HCT116 (cell line): ENCODE measurements at regions of chr4 and their contacts with region 1.

Region 1: GRCh38 chr4:11720292-11720691 is 291.6 kb upstream of the HS3ST1 start:
- DNase-seq: no peak
- ATAC-seq: peak; percentile 82
- H3K4me3 ChIP-seq: no peak overlapping the region
- H3K27ac ChIP-seq: peak overlapping the region; percentile 45
- H3K4me1 ChIP-seq: peaks cover 5 to 47% of the 10 kb centered on the region in 2 experiments; a peak in 3 of 4 replicates
- H3K27me3 ChIP-seq: no peaks in the 10 kb centered on the region
- CTCF ChIP-seq: peak; percentile 48 to 77 (median 74); a peak in 5 of 6 replicates
- POLR2A ChIP-seq: no peak
- RAD21 ChIP-seq: peak; percentile 92

Region 2: GRCh38 chr4:10582059-10582686 is 1138.1 kb before region 1 on chr4:
- CTCF ChIA-PET with region 1: no interaction called
- POLR2A ChIA-PET with region 1: no interaction called
- RAD21 ChIA-PET with region 1: no interaction called
- intact Hi-C with region 1: loop called (anchors 2 kb)
- DNase-seq: peak; percentile 54
- ATAC-seq: peak; percentile 94
- H3K4me3 ChIP-seq: no peak overlapping the region
- H3K27ac ChIP-seq: no peak overlapping the region
- H3K4me1 ChIP-seq: peaks cover 0 to 9% of the 10 kb centered on the region in 2 experiments; a peak in 1 of 4 replicates
- H3K27me3 ChIP-seq: no peaks in the 10 kb centered on the region
- CTCF ChIP-seq: peak; percentile 72 to 94 (median 76)
- POLR2A ChIP-seq: no peak
- RAD21 ChIP-seq: peak; percentile 93

Region 3: DNA sequence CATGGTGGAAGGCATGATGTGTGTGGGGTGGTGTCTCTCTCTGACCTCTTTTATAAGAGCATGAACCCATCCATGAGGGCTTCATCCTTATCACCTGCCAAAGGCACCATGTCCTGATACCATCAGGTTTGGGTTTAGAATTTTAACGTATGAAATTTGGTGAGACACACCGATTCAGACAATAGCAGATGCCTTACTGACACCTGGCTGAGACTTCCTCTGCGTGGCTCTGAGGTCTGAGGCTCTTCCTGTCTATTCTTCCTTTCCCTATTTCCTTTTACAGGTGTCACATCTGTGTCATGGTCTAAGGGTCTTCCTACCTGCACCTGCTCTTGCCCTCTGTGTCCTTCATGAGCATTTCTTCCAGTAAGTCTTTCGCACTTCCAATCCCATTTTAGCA is 715.0 kb before region 1 on chr4:
- CTCF ChIA-PET with region 1: no interaction called
- POLR2A ChIA-PET with region 1: no interaction called
- RAD21 ChIA-PET with region 1: no interaction called
- intact Hi-C with region 1: no loop called
- DNase-seq: no peak
- ATAC-seq: no peak
- H3K4me3 ChIP-seq: no peak overlapping the region
- H3K27ac ChIP-seq: no peak overlapping the region
- H3K4me1 ChIP-seq: no peaks in the 10 kb centered on the region
- H3K27me3 ChIP-seq: no peaks in the 10 kb centered on the region
- CTCF ChIP-seq: no peak
- POLR2A ChIP-seq: no peak
- RAD21 ChIP-seq: no peak

Region 4: GRCh38 chr4:11487876-11488544 is 232.3 kb before region 1 on chr4:
- CTCF ChIA-PET with region 1: no interaction called
- POLR2A ChIA-PET with region 1: no interaction called
- RAD21 ChIA-PET with region 1: no interaction called
- intact Hi-C with region 1: loop called (anchors 5 kb)
- DNase-seq: no peak
- ATAC-seq: no peak
- H3K4me3 ChIP-seq: no peak overlapping the region
- H3K27ac ChIP-seq: no peak overlapping the region
- H3K4me1 ChIP-seq: peaks cover 17 to 38% of the 10 kb centered on the region in 2 experiments; a peak in 3 of 4 replicates
- H3K27me3 ChIP-seq: no peaks in the 10 kb centered on the region
- CTCF ChIP-seq: no peak
- POLR2A ChIP-seq: no peak
- RAD21 ChIP-seq: no peak

Region 5: DNA sequence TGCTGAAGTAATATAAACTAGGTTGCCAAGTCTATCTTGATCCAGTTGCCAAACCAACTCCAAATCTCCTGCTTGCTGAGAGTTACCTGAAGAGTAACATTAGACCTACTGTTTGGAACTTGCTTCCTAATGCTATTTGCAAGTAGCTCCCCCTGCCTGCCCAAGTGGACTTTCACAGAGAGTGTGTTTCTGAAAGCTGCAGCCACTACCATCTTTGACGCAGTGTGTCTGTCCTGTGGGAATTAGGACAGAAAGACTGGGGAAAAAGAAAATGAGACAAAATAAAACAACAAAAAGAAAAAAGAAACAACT is 96.6 kb before region 1 on chr4:
- CTCF ChIA-PET with region 1: no interaction called
- POLR2A ChIA-PET with region 1: no interaction called
- RAD21 ChIA-PET with region 1: no interaction called
- intact Hi-C with region 1: loop called (anchors 5 kb)
- DNase-seq: no peak
- ATAC-seq: peak; percentile 49
- H3K4me3 ChIP-seq: no peak overlapping the region
- H3K27ac ChIP-seq: peak overlapping the region; percentile 94
- H3K4me1 ChIP-seq: peaks cover 58 to 87% of the 10 kb centered on the region in 2 experiments
- H3K27me3 ChIP-seq: no peaks in the 10 kb centered on the region
- CTCF ChIP-seq: peak in 2 of 3 experiments; percentile 63 to 67; a peak in 4 of 6 replicates
- POLR2A ChIP-seq: no peak
- RAD21 ChIP-seq: no peak

Region 6: DNA sequence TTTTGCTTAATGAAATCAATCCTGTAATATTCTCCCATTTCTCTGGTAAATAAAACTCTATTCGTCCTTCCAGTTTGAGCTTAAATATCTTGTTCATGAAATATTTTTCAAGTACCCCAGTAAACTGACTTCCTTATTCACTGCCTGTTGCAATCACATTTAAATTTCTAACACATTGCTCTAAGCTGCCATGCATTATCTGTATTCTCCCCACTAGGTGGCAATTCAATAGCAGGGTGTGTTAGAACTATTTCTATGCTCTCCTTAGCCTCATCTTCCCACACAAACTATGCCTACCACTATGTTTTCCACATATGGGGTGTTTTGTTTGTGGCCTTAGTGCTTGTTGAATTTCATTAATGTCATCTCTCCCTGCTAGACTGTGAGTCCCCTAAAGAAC is 85.5 kb after region 1 on chr4:
- CTCF ChIA-PET with region 1: no interaction called
- POLR2A ChIA-PET with region 1: no interaction called
- RAD21 ChIA-PET with region 1: no interaction called
- intact Hi-C with region 1: no loop called
- DNase-seq: peak; percentile 53
- ATAC-seq: peak; percentile 94
- H3K4me3 ChIP-seq: no peak overlapping the region
- H3K27ac ChIP-seq: no peak overlapping the region
- H3K4me1 ChIP-seq: no peaks in the 10 kb centered on the region
- H3K27me3 ChIP-seq: no peaks in the 10 kb centered on the region
- CTCF ChIP-seq: peak; percentile 46 to 80 (median 73); a peak in 5 of 6 replicates
- POLR2A ChIP-seq: no peak
- RAD21 ChIP-seq: peak; percentile 69